OCI-LY7 (cell line): ENCODE measurements at regions of chr3 and their contacts with region 1.

Region 1: GRCh38 chr3:195850857-195851543 is 39.3 kb upstream of the MUC4 start:
- DNase-seq: peak; percentile 93
- H3K4me3 ChIP-seq: no peak overlapping the region
- H3K27ac ChIP-seq: no peak overlapping the region
- H3K4me1 ChIP-seq: no peaks in the 10 kb centered on the region
- CTCF ChIP-seq: peak; percentile 100

Region 2: DNA sequence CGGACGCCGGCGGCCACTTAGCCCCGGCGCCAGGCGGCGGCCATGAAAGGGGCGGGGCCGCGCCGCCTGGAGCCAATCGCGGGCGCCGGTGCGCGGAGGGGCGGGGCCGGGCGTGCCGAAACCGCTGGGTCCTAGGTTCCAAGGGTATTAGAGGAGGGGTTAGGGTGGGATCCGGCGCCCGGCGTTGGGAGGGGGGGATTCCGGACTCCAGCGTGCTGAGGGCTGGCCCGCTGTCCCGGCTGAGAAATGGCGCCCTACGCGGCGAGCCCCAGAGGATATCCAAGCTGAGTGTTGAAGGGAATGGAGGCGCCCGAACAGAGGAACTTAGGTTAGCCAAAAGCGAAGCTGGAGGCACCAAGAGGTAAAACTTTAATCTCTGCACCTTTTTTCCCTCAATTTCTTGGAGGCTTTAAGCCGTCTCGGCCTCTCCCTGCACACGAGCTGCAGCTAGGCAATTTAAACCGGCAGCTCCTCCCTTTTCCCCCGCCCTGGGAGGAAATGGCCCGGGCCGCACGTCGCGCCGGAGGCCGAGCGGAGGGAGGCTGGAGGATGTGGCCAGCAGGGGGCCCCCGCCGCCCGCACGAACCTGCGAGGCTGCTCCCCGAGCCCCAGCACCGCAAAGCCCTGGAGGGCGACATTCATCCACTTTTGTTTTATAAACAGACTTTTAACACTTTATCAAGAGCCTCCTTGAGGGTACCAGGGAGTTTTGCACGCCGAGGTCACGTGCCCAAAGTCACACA is 579.7 kb before region 1 on chr3 and contains the start of gene XXYLT1:
- CTCF ChIA-PET with region 1: no interaction called
- POLR2A ChIA-PET with region 1: no interaction called
- intact Hi-C with region 1: loop called (anchors 1 kb)
- DNase-seq: peak; percentile 93
- H3K4me3 ChIP-seq: peak within 1 kb of the TSS; percentile 79
- H3K27ac ChIP-seq: peak within 1 kb of the TSS; percentile 77
- H3K4me1 ChIP-seq: peaks cover 24% of the 10 kb centered on the region
- CTCF ChIP-seq: peak; percentile 99
- total RNA-seq, gene XXYLT1: 16.2 and 19.6 TPM in 2 replicates

Region 3: DNA sequence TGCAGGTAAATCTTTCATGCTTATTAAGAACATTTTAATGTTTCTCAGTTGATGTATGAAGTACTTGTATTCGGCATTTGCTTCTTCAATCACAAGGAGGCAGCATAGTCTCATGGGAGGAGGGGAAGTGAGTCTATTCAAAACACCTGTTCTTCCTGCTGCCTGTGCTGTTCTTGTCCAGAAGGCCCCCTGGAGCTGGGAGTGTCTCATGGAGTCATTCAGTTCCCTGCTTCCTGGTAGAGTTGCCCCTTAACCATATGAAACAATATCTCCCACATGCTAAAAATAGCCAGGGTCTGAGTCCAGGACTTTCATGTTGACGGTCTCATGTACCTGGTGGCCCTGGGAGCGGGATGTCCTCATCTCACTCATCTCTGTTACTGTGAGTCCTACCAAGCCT is 292.4 kb before region 1 on chr3:
- CTCF ChIA-PET with region 1: no interaction called
- POLR2A ChIA-PET with region 1: no interaction called
- intact Hi-C with region 1: loop called (anchors 1 kb)
- DNase-seq: peak; percentile 80
- H3K4me3 ChIP-seq: no peak overlapping the region
- H3K27ac ChIP-seq: no peak overlapping the region
- H3K4me1 ChIP-seq: peaks cover 9% of the 10 kb centered on the region
- CTCF ChIP-seq: peak; percentile 92

Region 4: GRCh38 chr3:195738274-195739044 is 112.5 kb before region 1 on chr3:
- CTCF ChIA-PET with region 1: no interaction called
- POLR2A ChIA-PET with region 1: no interaction called
- intact Hi-C with region 1: loop called (anchors 5 kb)
- DNase-seq: no peak
- H3K4me3 ChIP-seq: no peak overlapping the region
- H3K27ac ChIP-seq: no peak overlapping the region
- H3K4me1 ChIP-seq: no peaks in the 10 kb centered on the region
- CTCF ChIP-seq: no peak

Region 5: DNA sequence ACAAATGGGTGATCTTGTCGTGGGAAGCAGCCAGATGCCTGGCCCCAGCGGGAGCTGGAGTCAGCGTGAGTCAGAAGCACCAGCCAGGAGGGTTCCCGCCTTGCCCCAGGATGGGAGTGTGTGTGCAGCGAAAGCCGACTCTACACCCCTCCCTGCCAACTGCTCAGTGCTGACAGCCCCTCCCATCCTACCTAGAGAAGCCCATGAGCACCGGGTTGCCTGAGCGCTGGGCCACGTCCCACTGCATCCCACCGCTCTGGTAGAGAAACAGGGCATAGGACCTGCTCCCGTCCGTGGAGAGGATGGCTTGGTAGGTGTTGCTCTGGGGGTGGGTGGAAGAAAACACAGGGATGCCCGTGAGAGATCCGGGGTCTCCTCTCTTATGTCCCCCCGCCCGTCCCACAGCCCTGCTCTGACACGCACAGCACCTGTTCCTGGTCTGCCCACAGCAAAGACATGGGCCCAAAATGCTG is 82.1 kb before region 1 on chr3:
- CTCF ChIA-PET with region 1: no interaction called
- POLR2A ChIA-PET with region 1: no interaction called
- intact Hi-C with region 1: loop called (anchors 5 kb)
- DNase-seq: no peak
- H3K4me3 ChIP-seq: no peak overlapping the region
- H3K27ac ChIP-seq: no peak overlapping the region
- H3K4me1 ChIP-seq: no peaks in the 10 kb centered on the region
- CTCF ChIP-seq: no peak

Region 6: GRCh38 chr3:195870442-195870841 is 19.4 kb after region 1 on chr3:
- CTCF ChIA-PET with region 1: no interaction called
- POLR2A ChIA-PET with region 1: no interaction called
- intact Hi-C with region 1: no loop called
- DNase-seq: no peak
- H3K4me3 ChIP-seq: no peak overlapping the region
- H3K27ac ChIP-seq: no peak overlapping the region
- H3K4me1 ChIP-seq: no peaks in the 10 kb centered on the region
- CTCF ChIP-seq: no peak

Region 7: DNA sequence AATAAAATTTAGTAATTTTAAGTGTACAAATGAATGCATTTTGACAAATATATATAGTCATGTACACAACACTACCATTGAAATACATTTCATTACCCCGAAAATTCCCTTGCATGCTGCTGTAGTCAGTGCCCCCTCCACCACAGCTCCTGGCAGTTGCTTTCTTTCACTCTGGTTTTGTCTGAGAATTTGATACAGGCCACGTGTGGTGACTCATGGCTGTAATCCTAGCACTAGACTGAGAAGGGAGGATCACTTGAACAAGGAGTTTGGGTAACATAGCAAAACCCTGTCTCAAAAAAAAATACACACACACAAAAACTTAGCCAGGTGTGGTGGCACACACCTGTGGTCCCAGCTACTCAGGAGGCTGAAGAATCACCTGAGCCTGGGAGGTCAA is 165.5 kb after region 1 on chr3:
- CTCF ChIA-PET with region 1: no interaction called
- POLR2A ChIA-PET with region 1: no interaction called
- intact Hi-C with region 1: no loop called
- DNase-seq: no peak
- H3K4me3 ChIP-seq: no peak overlapping the region
- H3K27ac ChIP-seq: no peak overlapping the region
- H3K4me1 ChIP-seq: no peaks in the 10 kb centered on the region
- CTCF ChIP-seq: no peak